IMR-90 (cell line): ENCODE measurements at regions of chr5 and their contacts with region 1.

Region 1: GRCh38 chr5:66144074-66144833 is at the start of gene SREK1:
- DNase-seq: peak; percentile 92
- ATAC-seq: peak; percentile 91
- H3K4me3 ChIP-seq: peak within 1 kb of the TSS; percentile 93
- H3K27ac ChIP-seq: peak within 1 kb of the TSS; percentile 79
- H3K4me1 ChIP-seq: no peaks in the 10 kb centered on the region; the same call in 1 of the 2 replicates
- H3K27me3 ChIP-seq: no peaks in the 10 kb centered on the region
- CTCF ChIP-seq: no peak
- POLR2A ChIP-seq: peak; percentile 94
- RAD21 ChIP-seq: no peak
- total RNA-seq, gene SREK1: 36.2 and 80.0 TPM in 2 replicates

Region 2: GRCh38 chr5:65624571-65625555 is 519.4 kb before region 1 on chr5 and contains the starts of genes SHLD3 and TRAPPC13:
- CTCF ChIA-PET with region 1: no interaction called
- POLR2A ChIA-PET with region 1: no interaction called
- dilution Hi-C with region 1: no loop called
- in situ Hi-C with region 1: no loop called
- intact Hi-C with region 1: loop called (anchors 10 kb)
- DNase-seq: peak; percentile 85
- ATAC-seq: peak; percentile 79
- H3K4me3 ChIP-seq: peak within 1 kb of the TSS; percentile 77
- H3K27ac ChIP-seq: peak within 1 kb of the TSS; percentile 85
- H3K4me1 ChIP-seq: no peaks in the 10 kb centered on the region
- H3K27me3 ChIP-seq: no peaks in the 10 kb centered on the region
- CTCF ChIP-seq: no peak
- POLR2A ChIP-seq: peak; percentile 50; the same call in 1 of the 2 replicates
- RAD21 ChIP-seq: no peak
- total RNA-seq, gene SHLD3: 2.5 and 3.9 TPM in 2 replicates
- total RNA-seq, gene TRAPPC13: 17.2 and 26.7 TPM in 2 replicates

Region 3: GRCh38 chr5:65742565-65743231 is 401.6 kb before region 1 on chr5:
- CTCF ChIA-PET with region 1: no interaction called
- POLR2A ChIA-PET with region 1: no interaction called
- dilution Hi-C with region 1: no loop called
- in situ Hi-C with region 1: no loop called
- intact Hi-C with region 1: loop called (anchors 5 kb)
- DNase-seq: peak; percentile 91
- ATAC-seq: peak; percentile 89
- H3K4me3 ChIP-seq: no peak overlapping the region
- H3K27ac ChIP-seq: peak overlapping the region; percentile 27; the same call in 1 of the 2 replicates
- H3K4me1 ChIP-seq: peaks cover 2% of the 10 kb centered on the region; the same call in 1 of the 2 replicates
- H3K27me3 ChIP-seq: no peaks in the 10 kb centered on the region
- CTCF ChIP-seq: peak; percentile 87
- POLR2A ChIP-seq: no peak
- RAD21 ChIP-seq: peak; percentile 91

Region 4: DNA sequence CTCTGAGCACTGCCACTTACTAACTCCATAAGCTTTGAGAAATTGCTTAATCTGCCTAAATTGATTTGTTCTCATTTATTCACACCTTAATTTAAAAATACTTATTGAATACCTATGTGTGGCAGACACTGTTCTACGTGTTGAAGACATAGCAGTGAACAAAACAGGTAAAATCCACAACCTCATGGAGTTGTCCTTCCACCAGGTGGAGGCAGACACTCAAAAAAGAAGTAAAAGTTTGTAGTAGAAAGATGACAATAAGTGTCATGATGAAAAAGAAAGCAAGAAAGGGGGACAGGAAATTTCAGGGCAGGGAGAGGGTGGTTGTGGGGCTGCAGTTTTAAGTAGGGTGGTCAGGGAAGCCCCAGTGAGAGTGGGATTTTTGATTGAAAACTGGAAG is 94.8 kb after region 1 on chr5:
- CTCF ChIA-PET with region 1: no interaction called
- POLR2A ChIA-PET with region 1: no interaction called
- dilution Hi-C with region 1: no loop called
- in situ Hi-C with region 1: no loop called
- intact Hi-C with region 1: no loop called
- DNase-seq: no peak
- ATAC-seq: no peak
- H3K4me3 ChIP-seq: no peak overlapping the region
- H3K27ac ChIP-seq: no peak overlapping the region
- H3K4me1 ChIP-seq: no peaks in the 10 kb centered on the region
- H3K27me3 ChIP-seq: peaks cover 10% of the 10 kb centered on the region
- CTCF ChIP-seq: 0 out of 2 replicates have a peak, but pooled peaks have one; percentile 13
- POLR2A ChIP-seq: no peak
- RAD21 ChIP-seq: peak; percentile 26